ENCODE measurements at regions of chr2 and their contacts with region 1.

Region 1: GRCh38 chr2:98736464-98736889 is 5.5 kb upstream of the MGAT4A start:
- DNase-seq: peak; percentile 26
- H3K4me3 Mint-ChIP-seq: peak overlapping the region; percentile 57
- H3K27ac Mint-ChIP-seq: peak overlapping the region; percentile 69
- H3K4me1 Mint-ChIP-seq: peaks cover 66% of the 10 kb centered on the region
- H3K27me3 Mint-ChIP-seq: peaks cover 2% of the 10 kb centered on the region

Region 2: GRCh38 chr2:98419977-98420725 is 316.3 kb before region 1 on chr2:
- intact Hi-C with region 1: no loop called
- DNase-seq: no peak
- H3K4me3 Mint-ChIP-seq: no peak overlapping the region
- H3K27ac Mint-ChIP-seq: no peak overlapping the region
- H3K4me1 Mint-ChIP-seq: peaks cover 5% of the 10 kb centered on the region
- H3K27me3 Mint-ChIP-seq: peaks cover 2% of the 10 kb centered on the region

Region 3: GRCh38 chr2:98432145-98432544 is 304.3 kb before region 1 on chr2:
- intact Hi-C with region 1: no loop called
- DNase-seq: no peak
- H3K4me3 Mint-ChIP-seq: no peak overlapping the region
- H3K27ac Mint-ChIP-seq: no peak overlapping the region
- H3K4me1 Mint-ChIP-seq: peaks cover 8% of the 10 kb centered on the region
- H3K27me3 Mint-ChIP-seq: peaks cover 13% of the 10 kb centered on the region

Region 4: DNA sequence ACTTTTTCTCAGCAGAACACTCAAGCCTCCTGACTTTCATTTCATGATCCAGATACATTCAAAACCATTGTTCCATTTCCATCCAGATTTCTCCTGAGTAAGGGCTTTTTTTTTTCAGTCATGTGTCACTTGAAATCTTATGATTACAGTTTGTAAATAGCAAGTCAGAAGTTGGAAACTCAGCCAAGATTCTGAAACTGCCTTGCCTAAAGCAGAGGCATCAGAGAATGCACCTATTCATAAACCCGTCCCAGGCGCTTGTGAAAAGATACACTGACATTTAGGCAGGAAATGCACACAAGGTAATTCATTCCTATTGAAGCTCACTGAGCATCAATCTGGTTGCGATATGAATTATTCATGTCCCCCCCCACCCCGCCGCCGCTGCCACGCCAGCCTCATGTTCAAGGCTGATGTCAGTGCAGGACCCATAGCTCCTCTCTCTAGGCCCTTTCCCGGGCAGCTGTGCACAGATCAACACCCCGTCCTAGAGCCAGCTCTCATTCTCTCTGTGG is 24.8 kb after region 1 on chr2:
- intact Hi-C with region 1: loop called (anchors 1 kb)
- DNase-seq: peak; percentile 46
- H3K4me3 Mint-ChIP-seq: peak overlapping the region; percentile 62
- H3K27ac Mint-ChIP-seq: peak overlapping the region; percentile 90
- H3K4me1 Mint-ChIP-seq: peaks cover 81% of the 10 kb centered on the region
- H3K27me3 Mint-ChIP-seq: no peaks in the 10 kb centered on the region

Region 5: DNA sequence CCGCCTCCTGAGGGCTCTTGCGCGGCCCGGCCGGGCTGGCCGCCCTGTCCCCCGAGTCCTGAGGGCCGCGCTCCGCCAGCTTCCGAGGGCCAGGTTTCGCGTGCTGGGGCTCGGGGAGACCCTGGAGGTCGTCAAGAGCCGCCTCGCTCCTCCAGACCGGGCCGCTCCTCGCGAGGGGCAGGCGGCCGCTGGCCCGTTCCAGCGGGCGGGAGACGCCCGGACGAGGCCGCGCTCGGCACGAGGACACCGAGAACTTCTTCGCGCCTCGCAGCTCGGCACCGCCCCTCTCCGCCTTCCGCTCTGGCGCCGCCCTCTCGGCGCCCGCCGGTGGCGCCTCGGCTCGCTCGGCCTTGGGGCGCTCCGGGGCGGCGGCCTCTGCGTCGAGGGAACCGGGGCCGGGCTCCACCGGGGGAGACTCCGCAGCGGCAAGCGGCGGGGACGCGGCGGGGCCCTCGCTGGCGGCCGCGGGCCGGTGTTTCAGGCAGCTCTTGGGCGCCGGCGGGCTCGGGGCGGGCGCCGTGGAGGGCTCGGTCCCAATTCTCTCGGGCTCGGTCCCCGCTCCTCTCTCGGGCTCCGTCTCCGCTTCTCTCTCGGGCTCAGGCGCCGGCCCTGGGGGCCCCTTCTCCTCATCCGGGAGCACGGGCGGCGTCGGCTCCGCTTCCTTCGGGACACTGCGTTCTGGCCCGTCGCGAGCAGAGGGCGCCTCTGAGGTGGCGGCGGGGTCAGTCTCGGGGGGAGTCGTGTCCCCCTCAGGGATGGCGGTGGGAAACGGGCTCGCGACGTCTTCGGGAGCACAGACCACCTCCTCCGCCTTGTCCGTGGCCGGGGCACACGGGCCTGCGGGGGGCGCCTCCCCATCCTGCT is 86.1 kb after region 1 on chr2:
- intact Hi-C with region 1: loop called (anchors 2 kb)
- DNase-seq: peak; percentile 63
- H3K4me3 Mint-ChIP-seq: peak overlapping the region; percentile 69
- H3K27ac Mint-ChIP-seq: no peak overlapping the region
- H3K4me1 Mint-ChIP-seq: peaks cover 27% of the 10 kb centered on the region
- H3K27me3 Mint-ChIP-seq: peaks cover 10% of the 10 kb centered on the region

Region 6: DNA sequence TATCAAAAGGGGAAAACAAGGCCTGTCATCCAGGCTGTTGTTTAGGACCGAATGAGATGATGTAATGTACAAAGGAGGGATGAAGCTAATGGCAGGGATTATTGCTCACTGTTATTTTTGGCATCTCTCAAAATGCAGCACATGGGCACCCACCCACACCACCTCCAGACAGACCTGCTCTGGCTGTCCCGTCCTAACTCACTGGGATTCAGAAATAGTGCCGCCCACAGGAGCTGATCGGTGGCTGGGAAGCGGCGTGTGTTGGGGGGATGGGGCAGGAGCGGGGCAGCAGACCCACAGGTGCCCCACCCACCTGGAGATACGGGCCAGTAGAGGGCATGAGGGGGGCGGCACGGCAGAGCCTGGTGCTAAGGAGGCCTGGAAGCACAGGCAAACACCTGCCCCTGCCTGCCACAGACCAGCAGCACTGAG is 147.3 kb after region 1 on chr2:
- intact Hi-C with region 1: no loop called
- DNase-seq: no peak
- H3K4me3 Mint-ChIP-seq: no peak overlapping the region
- H3K27ac Mint-ChIP-seq: no peak overlapping the region
- H3K4me1 Mint-ChIP-seq: no peaks in the 10 kb centered on the region
- H3K27me3 Mint-ChIP-seq: peaks cover 9% of the 10 kb centered on the region

Measured in activated T-helper 1 cell treated with anti-CD3 and anti-CD28 coated beads, Interleukin-12 subunit alpha, Interleukin-12 subunit beta, Interleukin-2, Interleukin-4 antibody, amounts not matched to agents 30 ng/mL and 10 ng/mL and 1 ng/mL, durations not matched to agents 14 hours and 24 hours and 36 hours (primary cell).